ENCODE measurements at regions of chr17 and their contacts with region 1.

Region 1: DNA sequence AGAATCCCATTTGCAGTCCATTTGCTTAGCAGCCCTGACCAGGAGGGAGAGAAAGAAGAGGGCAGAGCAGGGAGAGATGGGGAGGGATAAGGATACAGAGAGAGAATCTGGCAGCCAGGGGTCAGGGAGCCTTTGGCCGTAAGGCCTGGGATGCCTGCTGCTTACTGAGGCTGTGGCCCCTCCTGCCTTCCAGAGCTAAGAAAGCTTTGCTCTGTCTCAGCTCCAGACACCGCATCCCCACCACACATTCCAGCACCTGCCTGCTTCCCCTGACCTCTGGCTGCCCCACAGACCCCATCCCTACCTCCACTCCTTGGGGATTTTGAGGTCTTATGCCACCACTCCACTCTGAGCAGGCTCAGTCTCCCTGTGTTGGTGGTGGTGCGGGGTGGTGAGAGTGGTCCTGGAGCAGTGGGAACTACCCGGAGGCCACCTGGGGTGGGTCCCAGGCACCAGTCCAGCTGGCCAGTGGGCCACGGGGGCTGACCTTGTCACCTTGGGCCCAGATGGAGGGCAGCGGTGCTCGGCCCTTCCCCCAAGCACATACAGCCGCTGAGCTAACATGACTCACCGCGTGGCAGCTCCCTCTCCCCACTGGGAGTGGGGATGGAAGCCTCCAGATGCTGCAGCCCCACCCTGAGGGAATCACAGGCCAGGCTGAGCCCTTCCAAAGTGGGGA is 58.3 kb downstream of the RAI1 start:
- DNase-seq: no peak
- ATAC-seq: no peak
- H3K4me3 Mint-ChIP-seq: peak overlapping the region in 7 of 10 donors; percentile 17 to 74 (median 62)
- H3K27ac Mint-ChIP-seq: peak overlapping the region in 9 of 10 donors; percentile 84 to 94 (median 91)
- H3K4me1 Mint-ChIP-seq: peaks cover 33 to 72% (median 56%) of the 10 kb centered on the region in 4 donors
- H3K27me3 Mint-ChIP-seq: no peaks in the 10 kb centered on the region

Region 2: DNA sequence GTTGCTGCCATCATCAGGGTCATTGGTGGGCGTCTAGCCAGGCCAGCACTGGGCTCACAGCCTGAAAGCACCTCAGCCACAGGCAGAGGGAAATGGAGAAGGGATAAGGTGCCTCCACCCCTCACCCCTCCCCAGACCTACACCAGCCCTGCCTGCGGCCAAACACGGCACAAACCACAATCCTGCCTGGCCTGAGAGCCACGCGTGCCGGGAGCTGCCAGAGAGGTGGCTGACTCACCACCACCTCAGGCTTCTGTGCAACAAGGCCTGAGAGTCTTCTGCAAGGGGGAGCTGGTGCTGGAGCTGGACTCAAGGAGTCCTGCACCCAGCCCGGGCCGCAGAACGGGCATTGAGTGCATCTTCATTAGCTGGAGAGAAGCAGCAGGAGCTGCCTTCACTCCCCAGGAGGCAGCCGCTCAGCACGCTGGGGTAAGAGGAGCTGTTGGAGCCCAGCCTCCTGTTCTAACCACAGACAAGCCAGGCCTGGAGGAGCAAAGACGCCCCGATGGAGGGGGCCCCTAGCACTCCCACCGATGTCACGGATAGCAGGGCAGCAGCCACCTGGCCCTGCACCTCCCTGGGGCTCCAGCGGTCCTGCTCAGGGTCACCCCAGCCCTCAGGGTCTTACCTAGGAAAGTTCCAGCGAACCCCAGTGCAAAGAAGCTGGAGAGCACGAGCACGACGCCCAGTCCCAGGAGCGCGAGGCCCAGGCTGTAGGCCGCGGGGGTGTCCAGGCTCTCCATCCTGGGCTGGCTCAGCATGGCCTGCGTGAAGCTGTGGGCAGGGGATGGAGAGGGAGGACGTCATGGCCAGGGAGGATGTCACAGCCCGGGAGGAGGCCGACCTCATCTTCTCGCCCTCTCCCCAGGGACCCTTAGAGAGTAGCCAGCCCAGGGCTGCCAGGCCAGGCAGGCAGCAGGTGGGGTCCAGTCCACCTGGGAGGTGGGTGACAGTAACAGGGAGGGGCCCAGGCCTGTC is 227.4 kb before region 1 on chr17:
- POLR2A ChIA-PET with region 1: no interaction called
- DNase-seq: peak in 1 of 10 donors; percentile 58
- ATAC-seq: no peak
- H3K4me3 Mint-ChIP-seq: no peak overlapping the region
- H3K27ac Mint-ChIP-seq: peak overlapping the region in 1 of 10 donors; percentile 59
- H3K4me1 Mint-ChIP-seq: peaks cover 2 to 7% (median 2%) of the 10 kb centered on the region in 4 donors
- H3K27me3 Mint-ChIP-seq: no peaks in the 10 kb centered on the region

Region 3: DNA sequence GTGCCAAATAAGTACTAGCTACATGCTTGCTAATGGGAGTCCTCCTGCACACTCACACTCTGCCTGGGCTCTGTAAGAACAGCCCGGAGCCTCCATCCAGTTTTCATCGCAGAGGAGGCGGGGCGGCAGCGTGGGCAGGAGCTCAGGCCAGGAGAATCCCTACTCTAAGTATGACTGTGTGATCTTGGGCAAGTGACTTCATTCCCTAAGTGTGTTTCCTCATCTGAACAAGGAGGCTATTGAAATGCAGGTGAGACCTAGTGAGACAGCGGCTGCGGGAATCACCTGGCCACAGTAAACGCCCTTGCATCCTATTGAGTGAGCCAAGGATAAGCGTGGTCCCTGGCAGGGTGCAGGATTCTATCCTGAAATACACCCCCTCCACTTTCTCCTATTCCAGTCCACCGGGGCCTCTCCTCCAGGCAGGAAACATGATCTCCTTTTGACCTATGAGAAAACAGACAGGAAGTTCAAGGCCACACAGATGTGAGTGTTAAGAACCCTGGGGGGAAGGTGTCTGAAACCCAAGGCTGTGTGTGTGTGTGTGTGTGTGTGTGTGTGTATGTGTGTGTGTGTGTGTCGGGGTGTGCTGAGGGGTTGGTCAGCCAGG is 63.5 kb before region 1 on chr17:
- POLR2A ChIA-PET with region 1: no interaction called
- DNase-seq: peak in 4 of 10 donors; percentile 18 to 35 (median 26)
- ATAC-seq: peak; percentile 24 to 64
- H3K4me3 Mint-ChIP-seq: peak overlapping the region in 9 of 10 donors; percentile 15 to 59 (median 32)
- H3K27ac Mint-ChIP-seq: peak overlapping the region in 9 of 10 donors; percentile 16 to 88 (median 80)
- H3K4me1 Mint-ChIP-seq: peaks cover 26 to 47% (median 43%) of the 10 kb centered on the region in 4 donors
- H3K27me3 Mint-ChIP-seq: peaks cover 0 to 1% (median 0%) of the 10 kb centered on the region in 5 donors

Region 4: GRCh38 chr17:17723354-17724261 is 15.9 kb before region 1 on chr17:
- POLR2A ChIA-PET with region 1: interaction called, 12 read pairs
- DNase-seq: peak in 6 of 10 donors; percentile 18 to 42 (median 34)
- ATAC-seq: peak; percentile 47 to 64
- H3K4me3 Mint-ChIP-seq: peak overlapping the region; percentile 87 to 96 (median 92)
- H3K27ac Mint-ChIP-seq: peak overlapping the region in 7 of 10 donors; percentile 28 to 94 (median 80)
- H3K4me1 Mint-ChIP-seq: peaks cover 38 to 72% (median 50%) of the 10 kb centered on the region in 4 donors
- H3K27me3 Mint-ChIP-seq: peaks cover 0 to 11% (median 1%) of the 10 kb centered on the region in 5 donors

Region 5: GRCh38 chr17:17793378-17794125 is 54.0 kb after region 1 on chr17:
- POLR2A ChIA-PET with region 1: no interaction called
- DNase-seq: no peak
- ATAC-seq: no peak
- H3K4me3 Mint-ChIP-seq: peak overlapping the region; percentile 15 to 79 (median 60)
- H3K27ac Mint-ChIP-seq: peak overlapping the region; percentile 77 to 96 (median 94)
- H3K4me1 Mint-ChIP-seq: peaks cover 20 to 38% (median 31%) of the 10 kb centered on the region in 4 donors
- H3K27me3 Mint-ChIP-seq: no peaks in the 10 kb centered on the region

Measured in naive thymus-derived CD8-positive, alpha-beta T cell (primary cell).